Heart right ventricle (tissue), 16 donors: ENCODE measurements at regions of chr1 and their contacts with region 1.

Region 1: GRCh38 chr1:201400852-201401230 is 1.7 kb upstream of the LAD1 start:
- DNase-seq: no peak
- ATAC-seq: peak in 3 of 8 donors; percentile 38 to 55 (median 43)
- H3K4me3 ChIP-seq: no peak overlapping the region
- H3K27ac ChIP-seq: peak overlapping the region in 4 of 10 donors; percentile 5 to 71 (median 34)
- H3K4me1 ChIP-seq: peaks cover 0 to 59% (median 14%) of the 10 kb centered on the region in 9 donors
- H3K27me3 ChIP-seq: peaks cover 0 to 58% (median 31%) of the 10 kb centered on the region in 7 donors
- CTCF ChIP-seq: no peak

Region 2: GRCh38 chr1:201379691-201380619 is 20.9 kb before region 1 on chr1:
- intact Hi-C with region 1: loop called in 1 of 10 experiments (anchors 1 kb)
- DNase-seq: no peak
- ATAC-seq: peak in 5 of 8 donors; percentile 6 to 26 (median 12)
- H3K4me3 ChIP-seq: no peak overlapping the region
- H3K27ac ChIP-seq: peak overlapping the region; percentile 26 to 94 (median 87)
- H3K4me1 ChIP-seq: peaks cover 0 to 68% (median 26%) of the 10 kb centered on the region in 9 donors
- H3K27me3 ChIP-seq: peaks cover 0 to 1% (median 0%) of the 10 kb centered on the region in 7 donors
- CTCF ChIP-seq: no peak